ENCODE measurements at regions of chr13 and their contacts with region 1.

Region 1: GRCh38 chr13:71218960-71219359 is 648.0 kb downstream of the DACH1 start:
- DNase-seq: peak; percentile 48
- ATAC-seq: peak; percentile 91
- H3K4me3 ChIP-seq: no peak overlapping the region
- H3K27ac ChIP-seq: no peak overlapping the region
- H3K4me1 ChIP-seq: no peaks in the 10 kb centered on the region
- H3K27me3 ChIP-seq: no peaks in the 10 kb centered on the region
- CTCF ChIP-seq: peak; percentile 47

Region 2: DNA sequence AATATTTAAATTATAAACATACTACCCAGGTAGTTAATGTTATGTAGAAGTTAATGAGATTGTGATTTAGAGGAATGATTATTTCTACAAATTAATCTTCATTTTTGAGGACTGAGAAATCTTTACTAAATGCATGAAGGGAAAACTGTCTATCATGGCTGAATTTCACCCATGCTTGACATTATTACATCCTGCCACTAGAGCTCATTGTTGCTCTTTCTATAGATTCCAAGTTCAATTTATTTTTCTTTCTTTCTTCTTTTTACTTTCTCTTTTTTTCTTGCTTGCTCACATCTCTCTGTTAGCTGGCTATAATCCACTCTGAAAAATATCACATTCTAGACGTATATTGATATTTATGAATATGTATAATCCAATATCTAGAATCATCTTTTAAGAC is 605.7 kb before region 1 on chr13:
- CTCF ChIA-PET with region 1: no interaction called
- POLR2A ChIA-PET with region 1: no interaction called
- intact Hi-C with region 1: loop called (anchors 1 kb)
- DNase-seq: peak; percentile 35
- ATAC-seq: no peak
- H3K4me3 ChIP-seq: no peak overlapping the region
- H3K27ac ChIP-seq: no peak overlapping the region
- H3K4me1 ChIP-seq: no peaks in the 10 kb centered on the region
- H3K27me3 ChIP-seq: no peaks in the 10 kb centered on the region; the same call in 1 of the 2 replicates
- CTCF ChIP-seq: peak; percentile 63

Region 3: GRCh38 chr13:70960841-70961443 is 258.0 kb before region 1 on chr13:
- CTCF ChIA-PET with region 1: no interaction called
- POLR2A ChIA-PET with region 1: no interaction called
- intact Hi-C with region 1: loop called (anchors 1 kb)
- DNase-seq: peak; percentile 51
- ATAC-seq: no peak
- H3K4me3 ChIP-seq: peak overlapping the region; percentile 42; the same call in 1 of the 2 replicates
- H3K27ac ChIP-seq: no peak overlapping the region
- H3K4me1 ChIP-seq: no peaks in the 10 kb centered on the region
- H3K27me3 ChIP-seq: no peaks in the 10 kb centered on the region
- CTCF ChIP-seq: peak; percentile 75

Region 4: DNA sequence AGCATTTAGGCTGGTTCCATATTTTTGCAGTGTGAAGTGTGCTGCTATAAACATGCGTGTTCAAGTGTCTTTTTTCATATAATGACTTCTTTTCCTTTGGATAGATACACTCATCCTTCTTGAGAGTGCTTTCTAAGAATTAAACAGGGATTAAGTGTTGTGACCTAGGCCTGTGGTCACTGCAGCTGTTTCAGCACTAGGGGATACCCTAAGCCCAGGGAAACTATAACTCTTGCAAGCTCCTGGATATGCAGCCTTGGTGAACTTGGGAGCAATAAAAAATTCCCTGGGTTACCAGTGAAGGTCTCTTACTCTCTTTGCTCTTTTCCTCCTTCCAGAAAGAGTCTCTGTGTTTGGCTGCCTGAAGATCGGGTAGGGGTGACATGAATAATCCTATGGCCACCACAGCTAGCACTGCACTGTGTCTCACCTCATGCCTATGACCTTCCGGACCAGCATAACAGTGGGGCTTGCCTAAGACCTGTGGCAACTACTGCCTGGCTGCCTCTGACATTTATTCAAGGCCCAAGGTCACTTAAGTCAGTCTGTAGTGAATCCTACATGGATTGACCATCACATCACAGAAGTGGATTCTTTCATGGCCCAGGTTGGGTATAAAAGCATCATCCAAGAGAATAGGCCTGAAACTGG is 151.7 kb before region 1 on chr13:
- CTCF ChIA-PET with region 1: no interaction called
- POLR2A ChIA-PET with region 1: no interaction called
- intact Hi-C with region 1: loop called (anchors 2 kb)
- DNase-seq: no peak
- ATAC-seq: 0 out of 2 replicates have a peak, but pooled peaks have one; percentile 38
- H3K4me3 ChIP-seq: no peak overlapping the region
- H3K27ac ChIP-seq: no peak overlapping the region
- H3K4me1 ChIP-seq: no peaks in the 10 kb centered on the region
- H3K27me3 ChIP-seq: no peaks in the 10 kb centered on the region
- CTCF ChIP-seq: no peak

Region 5: DNA sequence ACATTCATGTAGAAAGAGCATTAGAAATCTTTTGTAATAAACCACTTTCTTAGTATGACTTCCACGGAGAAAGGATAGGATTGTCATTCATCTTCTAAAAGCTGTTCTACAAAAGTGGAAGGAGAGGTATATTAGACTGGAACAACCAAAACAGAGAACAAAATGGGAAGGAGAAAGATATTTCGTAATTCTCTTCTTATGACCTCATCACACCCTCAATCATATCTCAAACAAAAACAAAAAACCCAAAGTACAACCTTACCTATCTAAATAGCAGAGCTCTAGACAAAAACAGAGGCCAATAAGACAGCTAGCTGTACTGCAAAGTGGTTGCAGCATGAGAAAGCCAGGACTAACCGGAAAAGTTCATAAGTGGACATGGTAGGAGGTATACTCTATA is 601.7 kb after region 1 on chr13:
- CTCF ChIA-PET with region 1: no interaction called
- POLR2A ChIA-PET with region 1: no interaction called
- intact Hi-C with region 1: no loop called
- DNase-seq: no peak
- ATAC-seq: no peak
- H3K4me3 ChIP-seq: no peak overlapping the region
- H3K27ac ChIP-seq: no peak overlapping the region
- H3K4me1 ChIP-seq: no peaks in the 10 kb centered on the region
- H3K27me3 ChIP-seq: no peaks in the 10 kb centered on the region
- CTCF ChIP-seq: no peak